Heart left ventricle (tissue), 16 donors: ENCODE measurements at regions of chr16 and their contacts with region 1.

Region 1: GRCh38 chr16:31440516-31441184 is 1.9 kb downstream of the ZNF843 start:
- DNase-seq: no peak
- ATAC-seq: no peak
- H3K4me3 ChIP-seq: no peak overlapping the region
- H3K27ac ChIP-seq: peak overlapping the region in 9 of 12 donors; percentile 17 to 80 (median 46)
- H3K4me1 ChIP-seq: peaks cover 0 to 29% (median 11%) of the 10 kb centered on the region in 12 donors
- H3K27me3 ChIP-seq: no peaks in the 10 kb centered on the region
- CTCF ChIP-seq: no peak
- POLR2A ChIP-seq: no peak

Region 2: GRCh38 chr16:31117391-31118197 is 323.1 kb before region 1 on chr16 and contains the start of gene KAT8:
- intact Hi-C with region 1: loop called in 2 of 10 experiments (anchors 10 kb)
- DNase-seq: peak; percentile 98 to 99 (median 99)
- ATAC-seq: peak; percentile 90 to 97 (median 94)
- H3K4me3 ChIP-seq: peak within 1 kb of the TSS; percentile 41 to 97 (median 76)
- H3K27ac ChIP-seq: peak within 1 kb of the TSS; percentile 92 to 99 (median 96)
- H3K4me1 ChIP-seq: peaks cover 0 to 46% (median 32%) of the 10 kb centered on the region in 12 donors
- H3K27me3 ChIP-seq: no peaks in the 10 kb centered on the region
- CTCF ChIP-seq: no peak
- POLR2A ChIP-seq: peak; percentile 55 to 82
- total RNA-seq, gene KAT8: 52.8 to 79.8 (median 64.7) TPM

Region 3: DNA sequence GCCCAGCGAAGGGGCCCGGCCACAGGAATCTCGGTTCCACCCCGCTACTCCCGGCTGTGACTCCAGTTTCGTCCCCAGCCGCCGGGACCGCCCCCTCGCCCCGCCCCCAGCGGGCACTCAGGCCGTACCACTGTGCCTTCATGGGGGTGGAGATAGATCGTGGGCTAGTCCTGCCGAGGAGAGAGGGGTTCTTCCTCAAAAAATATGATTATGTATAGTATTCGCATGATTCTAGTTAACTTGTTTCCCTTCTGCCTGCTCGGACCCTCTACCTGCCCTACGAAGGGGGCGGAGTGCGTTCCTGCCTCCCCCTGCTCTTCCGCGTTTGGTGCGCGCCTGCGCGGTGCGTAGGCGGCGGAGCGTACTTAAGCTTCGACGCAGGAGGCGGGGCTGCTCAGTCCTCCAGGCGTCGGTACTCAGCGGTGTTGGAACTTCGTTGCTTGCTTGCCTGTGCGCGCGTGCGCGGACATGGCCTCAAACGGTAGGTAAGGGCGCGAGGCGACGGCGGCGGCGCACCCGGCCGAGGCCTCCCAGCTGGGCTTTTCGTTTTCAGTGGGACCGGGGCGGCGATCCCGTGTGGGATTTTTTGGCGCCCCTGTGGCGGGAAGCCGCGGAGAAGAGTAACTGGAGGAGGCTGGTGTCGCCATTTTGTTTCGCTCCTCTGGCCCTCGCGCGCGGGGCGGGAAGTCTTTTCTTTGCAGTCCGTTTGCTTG is 260.7 kb before region 1 on chr16 and contains the start of gene FUS:
- intact Hi-C with region 1: loop called in 5 of 10 experiments (anchors 5 to 10 kb)
- DNase-seq: peak; percentile 91 to 96 (median 93)
- ATAC-seq: peak; percentile 84 to 90 (median 88)
- H3K4me3 ChIP-seq: peak within 1 kb of the TSS; percentile 60 to 99 (median 86)
- H3K27ac ChIP-seq: peak within 1 kb of the TSS; percentile 87 to 99 (median 94)
- H3K4me1 ChIP-seq: peaks cover 0 to 47% (median 37%) of the 10 kb centered on the region in 12 donors
- H3K27me3 ChIP-seq: peaks cover 0 to 5% (median 0%) of the 10 kb centered on the region in 9 donors
- CTCF ChIP-seq: peak in 1 of 12 donors; percentile 8
- POLR2A ChIP-seq: peak; percentile 67 to 96
- total RNA-seq, gene FUS: 20.3 to 213 (median 127) TPM